ENCODE measurements at regions of chr12 and their contacts with region 1.

Region 1: GRCh38 chr12:127125607-127126259 is 1141.2 kb upstream of the TMEM132C start:
- DNase-seq: peak; percentile 98
- H3K4me3 Mint-ChIP-seq: peak overlapping the region; percentile 62
- H3K27ac Mint-ChIP-seq: peak overlapping the region; percentile 96
- H3K4me1 Mint-ChIP-seq: peaks cover 27% of the 10 kb centered on the region
- H3K27me3 Mint-ChIP-seq: no peaks in the 10 kb centered on the region
- CTCF ChIP-seq: no peak

Region 2: GRCh38 chr12:127165567-127166392 is 40.0 kb after region 1 on chr12:
- CTCF ChIA-PET with region 1: no interaction called
- POLR2A ChIA-PET with region 1: no interaction called
- intact Hi-C with region 1: loop called (anchors 2 kb)
- DNase-seq: peak; percentile 80
- H3K4me3 Mint-ChIP-seq: peak overlapping the region; percentile 68
- H3K27ac Mint-ChIP-seq: peak overlapping the region; percentile 64
- H3K4me1 Mint-ChIP-seq: peaks cover 29% of the 10 kb centered on the region
- H3K27me3 Mint-ChIP-seq: no peaks in the 10 kb centered on the region
- CTCF ChIP-seq: no peak

Region 3: DNA sequence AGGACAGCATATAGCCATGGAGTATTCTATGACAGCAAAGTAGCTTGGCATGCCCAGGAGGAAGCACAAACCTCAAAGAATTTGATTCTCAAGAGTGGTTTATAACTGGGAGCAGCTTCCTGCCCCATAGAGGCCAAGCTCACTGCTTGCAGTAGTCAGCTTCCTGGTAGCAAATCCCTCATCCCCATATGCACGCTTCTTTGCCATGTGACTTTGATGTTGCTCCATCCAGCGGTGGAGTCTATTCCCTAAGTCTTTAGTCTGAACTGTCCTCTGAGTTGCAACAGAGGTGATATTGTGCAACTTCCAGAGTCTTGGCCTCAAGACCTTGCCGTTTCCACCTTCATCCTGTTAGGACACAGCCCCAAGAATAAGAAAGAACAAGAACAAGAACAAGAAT is 144.5 kb after region 1 on chr12:
- CTCF ChIA-PET with region 1: interaction called, 3 read pairs
- POLR2A ChIA-PET with region 1: no interaction called
- intact Hi-C with region 1: loop called (anchors 5 kb)
- DNase-seq: peak; percentile 98
- H3K4me3 Mint-ChIP-seq: peak overlapping the region; percentile 1
- H3K27ac Mint-ChIP-seq: peak overlapping the region; percentile 1
- H3K4me1 Mint-ChIP-seq: peaks cover 27% of the 10 kb centered on the region
- H3K27me3 Mint-ChIP-seq: no peaks in the 10 kb centered on the region
- CTCF ChIP-seq: no peak

Region 4: DNA sequence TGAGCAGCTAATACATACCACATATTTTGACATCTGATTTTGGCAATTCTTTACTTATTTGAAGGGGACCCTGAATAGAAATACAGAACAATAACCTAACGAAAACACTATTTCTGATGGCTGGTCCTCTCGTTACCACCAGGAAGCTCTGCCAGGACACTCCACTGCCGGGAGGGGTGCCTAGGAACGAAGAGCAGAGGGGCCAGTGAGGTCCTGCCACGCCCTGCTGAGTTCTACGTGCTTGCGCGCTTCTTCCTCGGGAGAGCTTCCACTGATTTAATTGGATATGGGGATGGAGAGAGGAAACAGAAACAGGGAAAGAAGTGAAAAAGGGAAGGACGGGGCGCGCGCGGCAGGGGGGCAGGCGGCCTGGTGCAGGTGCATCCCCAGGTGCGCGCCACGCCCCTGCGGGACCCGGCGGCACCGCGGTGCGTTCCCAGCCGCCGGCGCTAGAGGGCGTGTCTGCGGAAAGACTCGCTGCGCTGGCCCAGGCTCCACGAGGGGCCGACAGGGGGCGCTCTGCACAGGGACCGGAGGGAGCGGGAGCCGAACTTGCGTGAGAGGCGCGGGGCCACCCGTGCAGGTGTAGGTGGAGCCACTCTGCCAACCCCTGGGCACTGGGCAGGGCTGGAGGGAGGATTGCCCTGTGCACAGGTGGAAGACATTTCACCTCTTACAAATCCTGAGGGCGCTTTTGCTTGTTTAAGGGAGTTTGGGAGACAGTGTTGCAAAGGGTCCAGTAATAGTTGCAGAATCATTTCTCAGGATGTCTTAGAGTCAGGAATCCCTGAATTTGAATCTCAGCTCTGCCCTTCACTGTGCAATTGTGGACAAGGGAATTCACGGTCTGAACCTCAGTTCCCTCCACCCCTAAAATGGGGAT is 154.9 kb after region 1 on chr12:
- CTCF ChIA-PET with region 1: no interaction called
- POLR2A ChIA-PET with region 1: no interaction called
- intact Hi-C with region 1: loop called (anchors 2 kb)
- DNase-seq: no peak
- H3K4me3 Mint-ChIP-seq: no peak overlapping the region
- H3K27ac Mint-ChIP-seq: no peak overlapping the region
- H3K4me1 Mint-ChIP-seq: peaks cover 11% of the 10 kb centered on the region
- H3K27me3 Mint-ChIP-seq: no peaks in the 10 kb centered on the region
- CTCF ChIP-seq: peak; percentile 48